Aorta (tissue), 5 donors: ENCODE measurements at regions of chr17 and their contacts with region 1.

Region 1: GRCh38 chr17:21126645-21127510 is at the start of gene DHRS7B:
- DNase-seq: peak; percentile 97 to 99
- ATAC-seq: peak; percentile 96
- H3K4me3 ChIP-seq: peak within 1 kb of the TSS; percentile 53 to 71
- H3K27ac ChIP-seq: peak within 1 kb of the TSS in 1 of 2 donors; percentile 69
- H3K4me1 ChIP-seq: no peaks in the 10 kb centered on the region
- H3K27me3 ChIP-seq: no peaks in the 10 kb centered on the region
- total RNA-seq, gene DHRS7B: 16.9 to 21.8 TPM

Region 2: GRCh38 chr17:21171309-21171922 is 44.5 kb after region 1 on chr17:
- intact Hi-C with region 1: loop called in 1 of 2 experiments (anchors 5 kb)
- DNase-seq: no peak
- ATAC-seq: no peak
- H3K4me3 ChIP-seq: no peak overlapping the region
- H3K27ac ChIP-seq: no peak overlapping the region
- H3K4me1 ChIP-seq: no peaks in the 10 kb centered on the region
- H3K27me3 ChIP-seq: no peaks in the 10 kb centered on the region

Region 3: GRCh38 chr17:21214015-21214776 is 87.3 kb after region 1 on chr17 and contains the start of gene TMEM11:
- intact Hi-C with region 1: loop called (anchors 2 to 5 kb)
- DNase-seq: peak; percentile 98 to 99
- ATAC-seq: peak; percentile 99
- H3K4me3 ChIP-seq: peak within 1 kb of the TSS; percentile 60 to 78
- H3K27ac ChIP-seq: peak within 1 kb of the TSS; percentile 45 to 57
- H3K4me1 ChIP-seq: no peaks in the 10 kb centered on the region
- H3K27me3 ChIP-seq: no peaks in the 10 kb centered on the region
- total RNA-seq, gene TMEM11: 16.8 to 17.7 TPM

Region 4: DNA sequence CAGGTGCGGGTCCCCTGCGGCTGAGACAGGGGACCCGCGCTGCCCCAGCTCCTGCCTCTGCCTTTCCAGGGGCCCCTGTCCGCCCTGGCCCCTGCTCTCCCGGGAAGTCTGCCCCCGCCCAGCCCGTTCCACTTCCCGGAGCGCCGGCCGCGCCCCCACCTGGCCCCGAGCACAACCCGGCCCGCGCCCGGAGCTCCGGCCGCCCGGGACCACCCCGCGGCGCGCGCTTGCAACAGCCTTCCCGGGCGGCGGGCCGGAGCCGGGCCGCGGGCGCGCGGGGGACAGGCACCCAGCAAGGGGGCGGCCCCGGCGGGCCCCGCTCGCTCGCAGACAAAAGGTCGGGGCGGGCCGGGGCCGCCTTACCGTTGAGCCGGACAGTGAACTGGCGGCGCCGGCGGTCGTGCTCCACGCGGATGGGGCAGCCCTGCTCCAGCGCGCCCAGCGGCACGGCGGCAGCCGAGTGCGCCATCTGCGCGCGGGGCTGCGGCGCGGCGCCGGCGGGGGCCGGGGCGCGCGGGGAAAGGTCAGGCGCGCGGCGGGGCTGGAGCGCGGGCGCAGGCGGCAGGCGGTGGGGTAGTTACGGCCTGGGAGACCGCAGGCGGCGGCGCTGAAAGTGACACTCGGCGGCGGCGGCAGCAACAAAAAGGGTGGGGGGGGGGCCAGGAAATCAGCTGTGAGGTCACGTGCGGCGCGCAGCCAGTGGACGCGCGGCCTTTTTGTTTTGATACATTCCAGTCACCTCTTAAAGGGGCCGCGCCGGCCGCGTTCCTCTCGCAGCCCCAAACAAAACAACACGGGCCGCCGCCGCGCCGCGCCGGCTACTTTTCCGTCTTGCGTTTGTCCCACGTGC is 126.1 kb after region 1 on chr17 and contains the start of gene NATD1:
- intact Hi-C with region 1: loop called in 1 of 2 experiments (anchors 10 kb)
- DNase-seq: peak; percentile 94
- ATAC-seq: peak; percentile 81
- H3K4me3 ChIP-seq: peak within 1 kb of the TSS; percentile 86 to 95
- H3K27ac ChIP-seq: peak within 1 kb of the TSS in 1 of 2 donors; percentile 72
- H3K4me1 ChIP-seq: peaks cover 0 to 3% of the 10 kb centered on the region in 2 donors
- H3K27me3 ChIP-seq: no peaks in the 10 kb centered on the region
- total RNA-seq, gene NATD1: 7.2 to 13.4 TPM

Region 5: DNA sequence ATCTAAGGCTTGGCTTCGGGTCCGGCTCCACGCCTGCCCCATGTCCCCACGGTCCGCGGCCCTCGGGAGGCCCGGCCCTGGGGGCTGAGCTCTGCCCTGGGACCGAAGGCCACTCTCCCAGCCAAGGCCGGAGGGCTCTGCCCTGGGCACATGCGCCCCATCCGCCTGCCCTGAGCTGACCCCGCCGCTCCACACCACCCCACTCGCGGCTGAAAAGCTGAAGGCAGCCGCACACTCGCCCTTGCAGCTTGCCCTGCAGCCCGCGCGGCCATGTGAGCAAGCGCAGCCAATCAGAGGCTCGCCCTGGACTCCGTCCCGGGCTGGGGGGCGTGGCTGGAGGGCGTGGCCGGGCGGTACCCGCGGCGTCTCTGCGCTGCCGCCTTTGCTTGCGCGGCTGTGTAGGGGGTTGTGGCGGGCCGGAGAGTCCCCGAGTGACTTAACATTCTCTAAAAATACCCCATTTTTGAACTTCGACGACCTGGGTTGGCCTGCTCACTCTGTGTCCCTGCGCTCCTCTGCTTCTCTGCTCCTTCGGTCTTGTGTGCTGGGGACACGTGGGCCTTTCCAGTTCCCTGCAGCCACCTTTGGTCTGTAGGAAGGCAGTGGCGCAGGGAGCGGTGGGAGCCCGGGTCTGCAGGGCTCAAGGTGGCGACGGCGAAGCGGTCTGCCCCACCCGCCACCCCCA is 148.8 kb after region 1 on chr17:
- intact Hi-C with region 1: loop called (anchors 5 to 10 kb)
- DNase-seq: peak; percentile 97 to 99
- ATAC-seq: peak; percentile 96
- H3K4me3 ChIP-seq: peak overlapping the region; percentile 44 to 69
- H3K27ac ChIP-seq: no peak overlapping the region
- H3K4me1 ChIP-seq: no peaks in the 10 kb centered on the region
- H3K27me3 ChIP-seq: no peaks in the 10 kb centered on the region

Region 6: DNA sequence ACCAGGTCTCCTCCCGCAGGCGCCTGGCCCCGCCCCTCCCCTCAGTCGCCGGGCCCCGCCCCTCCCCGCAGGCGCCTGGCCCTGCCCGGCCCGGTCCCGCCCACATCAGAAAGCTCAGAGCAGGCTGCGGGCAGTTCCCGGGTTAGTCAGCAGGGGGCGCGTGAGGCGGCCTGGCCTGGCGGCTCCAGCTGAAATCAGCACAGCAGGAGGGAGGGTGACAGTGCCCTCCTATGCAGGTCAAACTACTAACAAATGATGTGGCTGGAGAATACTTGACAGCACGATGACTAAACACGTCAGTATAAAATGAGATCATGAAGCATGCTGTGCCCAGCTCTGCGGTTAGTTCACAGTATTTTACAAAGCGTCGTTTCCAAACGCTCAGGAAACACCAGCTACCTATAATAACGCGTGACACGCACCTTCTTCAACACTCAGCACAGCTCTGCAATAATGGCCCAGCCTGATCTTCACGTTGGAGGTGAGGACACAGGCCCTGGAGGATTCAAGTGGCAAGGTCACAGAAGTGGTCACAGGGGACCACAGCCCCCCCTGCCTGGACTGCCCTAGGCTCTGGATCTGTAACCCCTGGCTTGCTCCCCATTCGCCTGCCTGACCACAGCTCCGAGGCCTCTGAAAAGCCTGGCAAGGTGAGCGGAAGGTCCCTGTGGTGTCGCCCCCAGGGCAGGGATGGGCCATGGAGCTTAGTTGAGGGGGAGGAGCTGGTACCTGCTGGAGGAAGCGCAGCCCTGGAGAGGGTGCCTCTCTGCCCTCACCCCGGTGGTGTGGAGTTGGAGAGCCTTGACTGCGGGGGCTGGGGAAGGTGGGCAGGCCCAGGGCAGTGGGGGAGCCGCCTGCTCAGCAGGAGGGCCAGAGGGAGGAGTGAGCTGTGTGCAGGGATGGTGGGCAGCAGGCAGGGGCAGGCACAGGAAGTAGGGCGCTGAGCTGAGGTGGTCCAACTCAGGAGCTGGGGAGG is 330.5 kb after region 1 on chr17:
- intact Hi-C with region 1: loop called in 1 of 2 experiments (anchors 10 kb)
- DNase-seq: peak; percentile 91 to 98
- ATAC-seq: peak; percentile 93
- H3K4me3 ChIP-seq: no peak overlapping the region
- H3K27ac ChIP-seq: no peak overlapping the region
- H3K4me1 ChIP-seq: no peaks in the 10 kb centered on the region
- H3K27me3 ChIP-seq: no peaks in the 10 kb centered on the region

Region 7: DNA sequence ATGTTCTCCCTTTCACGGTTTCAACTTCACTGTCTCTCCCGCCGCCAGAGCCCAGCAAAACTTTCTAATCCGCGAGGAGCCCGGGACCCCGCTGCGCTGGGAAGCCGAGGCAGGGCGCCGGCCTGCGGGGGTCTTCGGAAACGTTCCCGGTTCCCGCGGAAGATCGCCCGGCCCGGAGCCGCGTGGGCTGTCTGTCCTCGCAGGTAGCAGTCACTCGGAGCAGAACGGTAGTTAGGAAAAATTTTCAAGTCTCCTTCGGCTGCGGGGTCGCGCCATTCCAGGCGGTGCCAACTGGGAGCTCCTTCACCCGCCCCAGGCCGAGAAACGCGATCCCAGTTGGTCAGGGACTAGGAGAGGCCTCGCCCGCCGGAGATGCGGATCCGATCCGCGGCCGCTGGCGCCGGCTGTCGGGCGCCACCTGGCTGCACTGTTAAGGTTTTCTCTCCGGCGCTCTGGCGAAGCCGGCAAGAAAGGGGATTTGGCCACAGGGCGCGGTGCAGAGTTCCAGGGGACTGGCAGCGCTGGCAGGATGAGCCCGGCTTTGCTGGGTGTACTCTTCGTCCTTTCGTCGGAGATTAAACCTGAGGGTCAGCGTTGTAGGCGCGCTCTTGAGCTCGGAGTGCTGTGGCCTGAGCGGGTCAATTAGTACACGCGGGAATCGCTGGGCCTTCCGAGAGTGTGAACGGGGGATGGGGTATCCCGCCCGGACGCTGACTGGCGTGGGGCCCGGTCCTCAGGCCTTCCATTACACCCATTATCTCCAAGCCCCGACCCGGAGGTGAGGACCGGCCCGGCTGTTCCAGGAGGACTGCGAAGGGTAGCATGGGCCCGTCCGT is 384.7 kb after region 1 on chr17:
- intact Hi-C with region 1: loop called in 1 of 2 experiments (anchors 5 kb)
- DNase-seq: peak; percentile 87 to 94
- ATAC-seq: peak; percentile 97
- H3K4me3 ChIP-seq: peak overlapping the region; percentile 55 to 73
- H3K27ac ChIP-seq: no peak overlapping the region
- H3K4me1 ChIP-seq: no peaks in the 10 kb centered on the region
- H3K27me3 ChIP-seq: no peaks in the 10 kb centered on the region